CD8-positive, alpha-beta memory T cell (primary cell): ENCODE measurements at regions of chr20 and their contacts with region 1.

Region 1: GRCh38 chr20:1503564-1504227 is 12.5 kb upstream of the SIRPB2 start:
- DNase-seq: peak; percentile 48 to 83 (median 69)
- H3K4me3 ChIP-seq: no peak overlapping the region
- H3K4me3 Mint-ChIP-seq: no peak overlapping the region
- H3K27ac ChIP-seq: no peak overlapping the region
- H3K27ac Mint-ChIP-seq: no peak overlapping the region
- H3K4me1 ChIP-seq: peaks cover 3% of the 10 kb centered on the region
- H3K4me1 Mint-ChIP-seq: peaks cover 2 to 7% (median 5%) of the 10 kb centered on the region in 3 donors
- H3K27me3 ChIP-seq: no peaks in the 10 kb centered on the region
- H3K27me3 Mint-ChIP-seq: peaks cover 29 to 53% of the 10 kb centered on the region in 2 donors

Region 2: GRCh38 chr20:1466211-1467081 is 37.2 kb before region 1 on chr20 and contains the start of gene NSFL1C:
- CTCF ChIA-PET with region 1: interaction called, 19 read pairs
- POLR2A ChIA-PET with region 1: no interaction called
- DNase-seq: peak; percentile 95 to 98 (median 97)
- H3K4me3 ChIP-seq: peak within 1 kb of the TSS; percentile 62
- H3K4me3 Mint-ChIP-seq: peak within 1 kb of the TSS; percentile 85 to 91 (median 89)
- H3K27ac ChIP-seq: peak within 1 kb of the TSS; percentile 70
- H3K27ac Mint-ChIP-seq: peak within 1 kb of the TSS; percentile 81 to 93 (median 88)
- H3K4me1 ChIP-seq: peaks cover 35% of the 10 kb centered on the region
- H3K4me1 Mint-ChIP-seq: peaks cover 43 to 56% (median 51%) of the 10 kb centered on the region in 3 donors
- H3K27me3 ChIP-seq: no peaks in the 10 kb centered on the region
- H3K27me3 Mint-ChIP-seq: peaks cover 0 to 8% of the 10 kb centered on the region in 2 donors
- total RNA-seq, gene NSFL1C: 103 to 107 TPM

Region 3: DNA sequence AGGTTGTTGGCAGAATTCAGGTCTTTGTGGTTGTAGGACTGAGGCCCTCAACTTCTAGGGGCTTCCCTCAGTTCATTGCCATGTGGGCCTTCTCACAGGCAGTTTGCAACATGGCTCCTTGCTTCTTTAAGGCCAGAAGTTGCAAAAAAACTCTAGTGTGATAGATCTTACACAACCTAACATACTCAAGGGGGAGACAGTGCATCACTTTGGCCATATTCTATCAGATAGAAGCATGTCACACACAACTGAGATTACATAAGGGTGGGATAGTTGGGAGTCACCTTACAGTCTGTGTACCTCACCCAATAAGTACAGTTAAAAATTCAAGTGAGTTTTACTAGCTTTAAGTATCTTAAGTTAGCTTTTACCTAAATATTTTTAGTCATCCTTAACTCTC is 52.3 kb after region 1 on chr20:
- CTCF ChIA-PET with region 1: no interaction called
- POLR2A ChIA-PET with region 1: no interaction called
- DNase-seq: peak in 2 of 5 donors; percentile 9 to 12
- H3K4me3 ChIP-seq: no peak overlapping the region
- H3K4me3 Mint-ChIP-seq: no peak overlapping the region
- H3K27ac ChIP-seq: no peak overlapping the region
- H3K27ac Mint-ChIP-seq: peak overlapping the region in 1 of 8 donors; percentile 38
- H3K4me1 ChIP-seq: no peaks in the 10 kb centered on the region
- H3K4me1 Mint-ChIP-seq: peaks cover 0 to 8% (median 7%) of the 10 kb centered on the region in 3 donors
- H3K27me3 ChIP-seq: no peaks in the 10 kb centered on the region
- H3K27me3 Mint-ChIP-seq: peaks cover 0 to under 1% of the 10 kb centered on the region in 2 donors